Naive thymus-derived CD4-positive, alpha-beta T cell (primary cell): ENCODE measurements at regions of chr18 and their contacts with region 1.

Region 1: GRCh38 chr18:70454704-70455322 is 166.0 kb downstream of the SOCS6 start:
- DNase-seq: peak in 6 of 9 donors; percentile 8 to 43 (median 32)
- ATAC-seq: peak; percentile 57
- H3K4me3 ChIP-seq: no peak overlapping the region
- H3K4me3 Mint-ChIP-seq: no peak overlapping the region
- H3K27ac ChIP-seq: no peak overlapping the region
- H3K27ac Mint-ChIP-seq: no peak overlapping the region
- H3K4me1 ChIP-seq: no peaks in the 10 kb centered on the region
- H3K4me1 Mint-ChIP-seq: no peaks in the 10 kb centered on the region
- H3K27me3 ChIP-seq: no peaks in the 10 kb centered on the region
- H3K27me3 Mint-ChIP-seq: peaks cover 0 to 13% (median 3%) of the 10 kb centered on the region in 5 donors

Region 2: DNA sequence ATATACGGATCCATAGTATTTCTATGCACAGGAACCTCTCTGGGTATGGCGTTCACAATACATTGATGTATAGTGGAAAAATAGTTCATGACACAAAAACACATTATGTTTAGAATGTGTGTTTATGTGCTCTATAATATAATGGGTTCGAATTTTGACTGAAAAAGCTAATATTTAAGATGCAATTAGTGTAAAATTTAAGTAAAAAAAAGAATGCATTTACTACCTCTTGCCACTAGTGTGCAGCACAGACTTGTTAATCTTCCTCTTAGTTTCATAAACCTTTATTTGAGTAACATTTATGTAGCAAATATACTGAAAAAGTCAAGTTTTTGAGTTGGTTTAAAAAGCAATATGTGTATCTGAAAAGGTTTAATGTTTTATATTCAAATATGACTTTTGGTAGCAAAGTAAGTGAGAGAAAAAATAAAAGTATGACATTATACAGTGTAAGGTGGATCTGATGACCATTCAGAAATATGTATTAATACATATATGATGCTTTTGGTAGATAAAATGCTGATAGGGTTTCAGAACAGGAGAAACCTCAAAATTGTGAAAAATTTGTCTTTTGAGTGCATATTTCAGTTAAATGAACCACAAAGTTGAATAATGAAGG is 1607.5 kb before region 1 on chr18:
- CTCF ChIA-PET with region 1: no interaction called
- POLR2A ChIA-PET with region 1: no interaction called
- intact Hi-C with region 1: loop called (anchors 1 kb)
- DNase-seq: peak in 3 of 9 donors; percentile 2 to 19 (median 7)
- ATAC-seq: peak; percentile 42
- H3K4me3 ChIP-seq: no peak overlapping the region
- H3K4me3 Mint-ChIP-seq: no peak overlapping the region
- H3K27ac ChIP-seq: no peak overlapping the region
- H3K27ac Mint-ChIP-seq: no peak overlapping the region
- H3K4me1 ChIP-seq: no peaks in the 10 kb centered on the region
- H3K4me1 Mint-ChIP-seq: no peaks in the 10 kb centered on the region
- H3K27me3 ChIP-seq: no peaks in the 10 kb centered on the region
- H3K27me3 Mint-ChIP-seq: no peaks in the 10 kb centered on the region

Region 3: DNA sequence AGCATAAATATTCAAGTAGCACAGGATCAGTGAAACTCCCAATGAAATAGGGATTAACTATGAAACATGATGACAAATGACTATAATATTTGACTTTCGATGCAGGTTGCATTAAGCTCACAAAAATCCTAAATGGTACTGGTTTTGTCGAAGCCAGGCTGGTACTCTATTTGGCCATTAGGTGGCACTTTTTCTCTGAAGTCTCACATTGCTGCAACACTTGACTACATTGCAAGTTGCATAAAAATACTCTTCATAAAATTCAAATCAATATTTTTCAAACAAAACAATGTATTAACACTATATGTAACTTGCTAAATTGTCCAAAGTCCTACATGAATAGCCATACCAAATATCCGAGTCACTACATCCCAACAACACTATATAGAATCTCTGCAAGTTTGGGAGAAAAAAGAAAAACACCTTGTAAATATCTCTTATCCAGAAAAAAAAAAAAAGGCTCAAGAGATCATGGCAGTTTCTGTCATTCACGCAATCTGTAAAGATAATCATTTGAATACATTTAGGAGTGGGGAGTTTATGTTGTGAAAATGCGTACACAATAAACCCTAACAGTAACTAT is 258.9 kb before region 1 on chr18:
- CTCF ChIA-PET with region 1: interaction called, 4 read pairs
- POLR2A ChIA-PET with region 1: no interaction called
- intact Hi-C with region 1: loop called (anchors 1 kb)
- DNase-seq: peak in 5 of 9 donors; percentile 12 to 31 (median 18)
- ATAC-seq: peak; percentile 62
- H3K4me3 ChIP-seq: no peak overlapping the region
- H3K4me3 Mint-ChIP-seq: no peak overlapping the region
- H3K27ac ChIP-seq: no peak overlapping the region
- H3K27ac Mint-ChIP-seq: no peak overlapping the region
- H3K4me1 ChIP-seq: no peaks in the 10 kb centered on the region
- H3K4me1 Mint-ChIP-seq: peaks cover 0 to 18% (median 2%) of the 10 kb centered on the region in 7 donors
- H3K27me3 ChIP-seq: no peaks in the 10 kb centered on the region
- H3K27me3 Mint-ChIP-seq: no peaks in the 10 kb centered on the region